Activated CD8-positive, alpha-beta T cell treated with anti-CD3 and anti-CD28 coated beads for 36 hours (primary cell): ENCODE measurements at regions of chr12 and their contacts with region 1.

Region 1: DNA sequence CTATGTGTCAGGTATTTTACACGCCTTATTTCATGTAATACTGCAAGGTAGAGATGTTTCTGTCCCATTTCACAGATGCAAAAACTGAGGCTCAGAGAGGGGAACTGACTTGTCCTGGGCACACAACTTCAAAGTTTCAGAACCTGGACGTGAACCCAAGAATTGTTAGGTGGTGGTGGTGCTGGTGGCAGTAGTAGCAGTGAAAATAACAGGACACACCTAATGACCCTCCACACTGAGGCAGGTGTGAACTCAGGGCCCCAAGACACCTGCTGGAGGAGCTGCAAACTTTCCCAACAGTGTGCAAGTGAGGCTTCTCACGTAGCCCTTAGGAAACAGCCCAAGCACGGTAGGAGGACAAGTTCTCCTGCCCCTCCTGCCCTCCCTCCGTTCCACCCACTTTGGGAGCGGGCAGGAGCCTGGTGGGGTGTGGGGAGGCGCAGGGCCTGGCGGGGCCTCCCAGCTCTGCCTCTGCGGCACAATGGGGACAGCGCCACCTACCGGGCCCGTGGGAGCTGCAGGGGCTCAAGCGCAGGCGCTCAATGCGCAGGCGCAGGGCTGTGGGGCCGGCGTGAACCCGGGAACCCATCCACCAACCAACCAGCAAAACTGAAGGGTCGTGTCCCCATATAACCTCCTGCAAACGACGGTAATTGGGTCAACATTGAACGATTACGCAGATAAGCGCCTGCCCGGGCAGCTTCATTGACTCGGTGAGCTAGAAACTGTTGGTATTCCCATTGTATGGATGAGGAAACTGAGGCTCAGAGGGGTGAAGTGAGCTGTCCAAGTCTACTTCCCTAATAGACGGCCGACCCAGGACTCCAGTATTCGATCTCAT is 12.0 kb upstream of the TRPV4 start:
- DNase-seq: peak; percentile 93
- ATAC-seq: peak; percentile 99
- H3K4me3 Mint-ChIP-seq: peak overlapping the region; percentile 18
- H3K27ac Mint-ChIP-seq: no peak overlapping the region
- H3K4me1 Mint-ChIP-seq: peaks cover 6% of the 10 kb centered on the region
- H3K27me3 Mint-ChIP-seq: no peaks in the 10 kb centered on the region
- CTCF ChIP-seq: peak; percentile 100

Region 2: GRCh38 chr12:109804820-109805761 is 40.1 kb before region 1 on chr12:
- CTCF ChIA-PET with region 1: interaction called, 157 read pairs
- POLR2A ChIA-PET with region 1: no interaction called
- intact Hi-C with region 1: loop called (anchors 5 kb)
- DNase-seq: peak; percentile 74
- ATAC-seq: peak; percentile 93
- H3K4me3 Mint-ChIP-seq: no peak overlapping the region
- H3K27ac Mint-ChIP-seq: no peak overlapping the region
- H3K4me1 Mint-ChIP-seq: no peaks in the 10 kb centered on the region
- H3K27me3 Mint-ChIP-seq: no peaks in the 10 kb centered on the region
- CTCF ChIP-seq: peak; percentile 97

Region 3: GRCh38 chr12:109833307-109834189 is 11.7 kb before region 1 on chr12 and contains the start of gene TRPV4:
- CTCF ChIA-PET with region 1: interaction called, 21 read pairs
- POLR2A ChIA-PET with region 1: interaction called, 5 read pairs
- intact Hi-C with region 1: no loop called
- DNase-seq: no peak
- ATAC-seq: no peak
- H3K4me3 Mint-ChIP-seq: no peak within 1 kb of the TSS
- H3K27ac Mint-ChIP-seq: no peak within 1 kb of the TSS
- H3K4me1 Mint-ChIP-seq: peaks cover 3% of the 10 kb centered on the region
- H3K27me3 Mint-ChIP-seq: peaks cover 23% of the 10 kb centered on the region
- CTCF ChIP-seq: no peak
- total RNA-seq, gene TRPV4: not detected

Region 4: DNA sequence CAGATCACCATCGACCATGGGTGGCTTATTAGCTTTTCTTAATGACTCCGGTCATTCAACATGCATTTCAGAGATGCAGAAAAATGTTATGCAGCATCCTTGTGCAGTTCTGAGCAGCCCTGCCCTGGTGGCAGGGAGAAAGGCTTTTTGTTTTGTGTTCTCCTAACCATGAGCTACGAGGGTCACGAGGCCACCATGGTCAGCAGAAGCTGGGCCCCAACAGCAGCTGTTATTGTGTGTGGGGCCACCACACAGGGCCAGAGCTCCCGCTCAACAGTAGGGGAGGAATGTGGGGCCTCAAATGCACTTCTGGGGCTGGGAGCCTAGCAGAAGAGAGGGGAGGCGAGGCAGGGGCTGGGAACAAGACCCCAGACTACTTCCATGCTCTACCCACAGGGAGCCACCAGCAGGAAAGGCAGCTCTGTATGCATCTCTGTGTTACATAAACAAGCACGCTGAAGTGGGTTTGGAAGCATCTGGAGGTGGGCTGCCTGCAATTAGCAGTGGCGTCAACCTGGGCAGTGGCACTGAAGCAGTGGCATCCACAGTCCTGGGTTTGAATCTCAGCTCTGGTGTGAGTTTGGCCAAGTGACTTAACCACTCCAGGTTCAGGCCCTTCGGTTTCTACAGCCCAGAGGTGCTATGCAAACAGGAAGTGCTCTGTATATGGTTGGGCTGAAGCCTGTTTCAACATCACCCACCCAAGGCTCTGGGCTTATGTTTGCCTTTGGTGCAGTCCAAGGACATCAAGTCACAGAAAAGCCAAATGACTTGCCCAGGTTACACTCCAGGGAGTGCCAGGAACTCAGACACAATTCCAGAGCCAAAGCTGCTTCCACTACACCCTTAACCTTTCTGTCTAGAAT is 18.9 kb after region 1 on chr12:
- CTCF ChIA-PET with region 1: interaction called, 27 read pairs
- POLR2A ChIA-PET with region 1: interaction called, 3 read pairs
- intact Hi-C with region 1: no loop called
- DNase-seq: no peak
- ATAC-seq: peak; percentile 74
- H3K4me3 Mint-ChIP-seq: no peak overlapping the region
- H3K27ac Mint-ChIP-seq: peak overlapping the region; percentile 61
- H3K4me1 Mint-ChIP-seq: peaks cover 23% of the 10 kb centered on the region
- H3K27me3 Mint-ChIP-seq: no peaks in the 10 kb centered on the region
- CTCF ChIP-seq: no peak

Region 5: GRCh38 chr12:109880016-109880931 is 35.1 kb after region 1 on chr12 and contains the start of gene GLTP:
- CTCF ChIA-PET with region 1: interaction called, 18 read pairs
- POLR2A ChIA-PET with region 1: no interaction called
- intact Hi-C with region 1: no loop called
- DNase-seq: peak; percentile 85
- ATAC-seq: peak; percentile 98
- H3K4me3 Mint-ChIP-seq: peak within 1 kb of the TSS; percentile 96
- H3K27ac Mint-ChIP-seq: peak within 1 kb of the TSS; percentile 87
- H3K4me1 Mint-ChIP-seq: peaks cover 33% of the 10 kb centered on the region
- H3K27me3 Mint-ChIP-seq: no peaks in the 10 kb centered on the region
- CTCF ChIP-seq: peak; percentile 34
- total RNA-seq, gene GLTP: 19.9 to 21.2 TPM

Region 6: DNA sequence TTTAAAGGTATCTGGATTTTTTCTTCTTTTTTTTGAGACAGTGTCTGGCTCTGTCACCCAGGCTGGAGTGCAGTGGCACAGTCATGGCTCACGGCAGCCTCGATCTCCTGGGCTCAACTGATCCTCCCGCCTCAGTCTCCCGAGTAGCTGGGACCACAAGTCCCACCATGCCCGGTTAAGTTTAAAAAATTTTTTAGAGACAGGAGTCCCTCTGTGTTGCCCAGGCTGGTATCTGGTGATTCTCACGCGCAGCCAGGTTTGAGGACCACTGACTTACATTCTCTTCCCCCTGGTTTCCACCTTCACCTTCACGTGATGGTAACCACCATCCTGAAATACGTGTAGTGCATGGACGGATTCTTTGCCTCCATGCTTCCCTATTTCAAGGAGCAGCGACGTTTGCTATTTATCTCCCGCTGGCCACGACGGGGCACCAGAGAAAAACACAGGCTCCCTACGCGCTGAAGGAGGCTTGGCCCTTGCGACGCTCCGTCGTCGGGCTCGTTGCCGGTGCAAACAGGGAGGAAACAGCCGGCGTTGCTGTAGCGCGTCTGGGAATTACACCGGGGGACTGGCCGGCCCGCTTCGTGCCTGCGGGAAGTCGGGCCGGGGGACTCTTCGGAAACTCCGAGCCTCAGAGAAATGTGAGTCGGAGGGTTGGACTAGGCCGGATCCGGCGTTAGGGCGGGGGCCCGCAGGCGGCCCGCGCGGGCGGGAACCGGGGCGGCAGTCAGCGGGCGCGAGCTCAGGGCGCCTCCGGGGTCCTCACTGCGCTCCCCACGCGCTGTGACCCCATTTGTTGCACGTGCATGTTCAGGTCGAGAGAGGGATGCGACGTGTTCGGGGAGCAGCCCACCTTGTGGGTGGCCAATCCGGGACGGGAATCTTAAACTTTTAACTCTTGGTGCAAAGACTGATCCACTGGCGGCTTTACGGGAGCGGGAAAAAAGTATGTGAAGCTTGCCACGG is 54.9 kb after region 1 on chr12 and contains the start of gene TCHP:
- CTCF ChIA-PET with region 1: interaction called, 14 read pairs
- POLR2A ChIA-PET with region 1: interaction called, 4 read pairs
- intact Hi-C with region 1: no loop called
- DNase-seq: peak; percentile 84
- ATAC-seq: peak; percentile 89
- H3K4me3 Mint-ChIP-seq: peak within 1 kb of the TSS; percentile 96
- H3K27ac Mint-ChIP-seq: peak within 1 kb of the TSS; percentile 99
- H3K4me1 Mint-ChIP-seq: peaks cover 12% of the 10 kb centered on the region
- H3K27me3 Mint-ChIP-seq: no peaks in the 10 kb centered on the region
- CTCF ChIP-seq: no peak
- total RNA-seq, gene TCHP: 19.9 to 21.0 TPM